ENCODE measurements at regions of chr12 and their contacts with region 1.

Region 1: DNA sequence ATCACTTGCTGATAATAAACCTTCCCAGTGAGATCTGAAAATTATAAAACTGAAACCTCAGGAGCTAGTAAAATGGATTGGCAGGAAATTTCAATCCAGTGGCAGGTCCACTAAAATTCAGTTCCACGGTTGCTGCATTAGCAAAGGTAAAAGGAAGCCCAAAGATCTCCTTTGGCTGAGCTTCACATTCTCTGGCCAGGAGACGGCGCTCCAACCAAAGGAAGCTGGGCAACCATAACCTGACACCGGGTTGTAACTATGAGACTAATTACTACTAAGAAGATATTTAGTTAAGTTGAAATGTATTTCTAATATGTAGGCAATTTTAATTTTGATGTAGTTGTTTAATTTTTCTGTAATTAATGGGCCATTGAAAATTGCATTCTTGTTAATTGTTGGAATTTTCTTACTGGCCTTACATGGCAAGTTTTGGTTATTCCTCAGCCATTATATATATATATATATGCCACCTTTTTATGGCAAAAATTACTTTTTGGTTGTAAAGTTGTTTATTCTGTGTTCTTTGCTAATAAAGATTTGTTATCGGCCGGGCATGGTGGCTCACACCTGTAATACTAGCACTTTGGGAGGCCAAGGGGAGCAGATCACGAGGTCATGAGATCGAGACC is 17.0 kb downstream of the OR8S1 start:
- H3K4me3 Mint-ChIP-seq: no peak overlapping the region
- H3K27ac Mint-ChIP-seq: no peak overlapping the region
- H3K4me1 Mint-ChIP-seq: no peaks in the 10 kb centered on the region
- H3K27me3 Mint-ChIP-seq: peaks cover 10% of the 10 kb centered on the region

Region 2: GRCh38 chr12:48618541-48618940 is 76.1 kb after region 1 on chr12:
- intact Hi-C with region 1: loop called (anchors 1 kb)
- H3K4me3 Mint-ChIP-seq: no peak overlapping the region
- H3K27ac Mint-ChIP-seq: no peak overlapping the region
- H3K4me1 Mint-ChIP-seq: no peaks in the 10 kb centered on the region
- H3K27me3 Mint-ChIP-seq: peaks cover 25% of the 10 kb centered on the region

Region 3: GRCh38 chr12:48795480-48796455 is 253.4 kb after region 1 on chr12:
- intact Hi-C with region 1: loop called (anchors 5 kb)
- H3K4me3 Mint-ChIP-seq: no peak overlapping the region
- H3K27ac Mint-ChIP-seq: no peak overlapping the region
- H3K4me1 Mint-ChIP-seq: peaks cover 15% of the 10 kb centered on the region
- H3K27me3 Mint-ChIP-seq: peaks cover 8% of the 10 kb centered on the region

Measured in dendritic cell treated with granulocyte-macrophage colony-stimulating factor and Interleukin-4, amounts not matched to agents 40 ng/mL and 50 ng/mL, for 4 days (primary cell).